MCF 10A (cell line): ENCODE measurements at regions of chr14 and their contacts with region 1.

Region 1: GRCh38 chr14:49892636-49893308 is at the start of gene ARF6:
- DNase-seq: peak; percentile 97
- H3K4me3 Mint-ChIP-seq: peak within 1 kb of the TSS; percentile 92
- H3K27ac Mint-ChIP-seq: peak within 1 kb of the TSS; percentile 99
- H3K4me1 Mint-ChIP-seq: peaks cover 28% of the 10 kb centered on the region
- H3K27me3 Mint-ChIP-seq: no peaks in the 10 kb centered on the region
- CTCF ChIP-seq: no peak
- total RNA-seq, gene ARF6: 111 and 112 TPM in 2 replicates

Region 2: DNA sequence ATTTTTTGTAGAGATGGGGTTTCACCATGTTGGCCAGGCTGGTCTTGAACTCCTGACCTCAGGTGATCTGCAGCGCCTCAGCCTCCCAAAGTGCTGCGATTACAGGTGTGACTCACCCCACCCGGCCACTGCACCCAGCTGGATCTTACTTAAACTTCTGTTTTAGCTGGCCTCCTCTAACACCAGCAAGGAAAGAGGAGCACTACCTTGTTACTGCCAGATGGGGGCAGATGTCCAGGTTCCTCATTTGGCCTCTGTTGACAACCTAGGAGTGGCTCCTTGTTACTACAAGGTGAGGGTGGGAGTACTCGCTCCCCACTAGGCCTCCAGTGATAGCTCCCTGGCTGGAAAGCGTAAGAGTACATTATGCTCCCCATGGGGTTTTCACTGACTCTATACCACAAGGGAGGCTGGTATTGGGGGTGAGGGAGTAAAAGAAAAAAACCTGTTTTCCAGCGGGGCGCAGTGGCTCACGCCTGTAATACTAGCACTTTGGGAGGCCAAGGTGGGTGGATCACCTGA is 13.0 kb before region 1 on chr14:
- CTCF ChIA-PET with region 1: interaction called, 10 read pairs
- POLR2A ChIA-PET with region 1: interaction called, 14 read pairs
- intact Hi-C with region 1: no loop called
- DNase-seq: peak; percentile 83
- H3K4me3 Mint-ChIP-seq: no peak overlapping the region
- H3K27ac Mint-ChIP-seq: peak overlapping the region; percentile 27
- H3K4me1 Mint-ChIP-seq: no peaks in the 10 kb centered on the region
- H3K27me3 Mint-ChIP-seq: no peaks in the 10 kb centered on the region
- CTCF ChIP-seq: peak; percentile 39

Region 3: DNA sequence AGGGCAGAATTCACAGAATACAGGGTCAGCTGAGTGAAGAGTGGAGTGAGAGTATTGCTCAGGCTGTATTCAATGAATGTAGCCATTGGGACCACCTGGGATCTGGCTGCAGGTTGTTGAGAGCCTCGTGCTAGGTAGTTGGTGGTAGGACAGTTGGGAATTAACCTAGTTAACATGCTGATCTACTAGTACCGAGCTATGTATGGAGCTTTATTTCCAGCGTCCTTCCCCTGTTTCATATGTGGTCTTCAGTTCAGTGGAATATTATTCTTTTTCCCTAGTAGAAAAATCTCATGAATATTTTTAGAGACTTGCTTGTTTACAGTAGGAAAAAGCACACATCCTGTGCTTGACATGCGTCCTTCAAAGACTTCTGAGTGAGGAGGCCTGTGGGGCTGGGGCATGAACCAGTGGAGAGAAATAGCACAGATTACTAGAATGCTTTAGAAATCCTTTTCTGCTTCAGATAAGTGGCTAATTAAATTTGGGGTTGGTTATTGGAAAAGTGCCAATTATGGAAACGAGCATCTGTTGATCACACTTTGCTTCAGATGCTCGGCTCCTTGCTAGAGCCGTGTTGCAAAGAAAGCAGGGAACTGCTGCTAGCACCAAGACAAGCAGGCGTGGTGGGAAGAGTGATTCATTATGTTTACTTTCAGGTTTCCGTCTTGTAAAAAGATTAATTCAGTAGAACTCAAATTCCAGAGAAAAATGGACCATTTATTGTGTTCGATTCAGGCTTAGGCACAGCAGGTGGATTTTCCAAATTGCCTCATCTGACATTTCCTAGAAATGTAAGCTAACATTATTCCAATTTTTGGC is 53.8 kb after region 1 on chr14:
- CTCF ChIA-PET with region 1: interaction called, 3 read pairs
- POLR2A ChIA-PET with region 1: interaction called, 58 read pairs
- intact Hi-C with region 1: no loop called
- DNase-seq: peak; percentile 72
- H3K4me3 Mint-ChIP-seq: peak overlapping the region; percentile 42
- H3K27ac Mint-ChIP-seq: peak overlapping the region; percentile 81
- H3K4me1 Mint-ChIP-seq: peaks cover 38% of the 10 kb centered on the region
- H3K27me3 Mint-ChIP-seq: no peaks in the 10 kb centered on the region
- CTCF ChIP-seq: no peak

Region 4: GRCh38 chr14:49971156-49972130 is 78.7 kb after region 1 on chr14:
- CTCF ChIA-PET with region 1: interaction called, 3 read pairs
- POLR2A ChIA-PET with region 1: interaction called, 58 read pairs
- intact Hi-C with region 1: no loop called
- DNase-seq: peak; percentile 80
- H3K4me3 Mint-ChIP-seq: peak overlapping the region; percentile 58
- H3K27ac Mint-ChIP-seq: peak overlapping the region; percentile 89
- H3K4me1 Mint-ChIP-seq: peaks cover 48% of the 10 kb centered on the region
- H3K27me3 Mint-ChIP-seq: no peaks in the 10 kb centered on the region
- CTCF ChIP-seq: no peak

Region 5: DNA sequence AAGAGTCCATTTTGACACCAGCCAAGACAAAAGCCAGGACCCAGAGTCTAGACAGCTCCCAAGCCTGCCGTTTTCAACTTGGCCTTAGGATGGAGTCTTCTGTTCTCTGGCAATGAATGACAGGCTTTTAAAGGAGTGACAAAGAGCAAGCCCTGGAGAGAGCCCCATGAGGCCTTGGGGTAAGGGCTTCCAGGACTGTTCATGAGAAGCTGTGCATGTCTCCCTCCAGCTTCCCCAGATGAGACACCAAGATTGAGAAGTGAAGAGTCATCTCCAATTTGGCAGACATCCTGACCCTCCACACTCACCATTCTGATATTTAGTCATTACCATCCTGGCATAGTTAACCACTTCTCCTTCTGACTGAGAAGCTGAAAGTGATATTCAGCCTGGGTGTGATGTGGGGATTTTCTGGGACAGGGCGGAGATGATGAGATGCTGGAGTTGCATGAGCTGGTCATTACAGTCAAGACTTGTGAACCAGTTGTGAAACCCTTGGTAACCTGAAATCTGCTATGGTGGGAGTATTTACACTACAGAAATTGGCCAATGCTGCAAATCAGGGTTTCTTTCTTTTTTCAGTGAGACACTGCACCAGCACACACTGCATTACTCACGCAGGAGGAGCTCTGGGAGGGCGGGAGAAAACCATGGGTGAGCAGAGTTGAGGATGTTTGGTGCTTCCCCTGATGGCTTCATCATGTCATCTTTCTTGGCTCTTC is 145.8 kb after region 1 on chr14:
- CTCF ChIA-PET with region 1: no interaction called
- POLR2A ChIA-PET with region 1: interaction called, 11 read pairs
- intact Hi-C with region 1: loop called (anchors 1 kb)
- DNase-seq: peak; percentile 94
- H3K4me3 Mint-ChIP-seq: peak overlapping the region; percentile 40
- H3K27ac Mint-ChIP-seq: peak overlapping the region; percentile 89
- H3K4me1 Mint-ChIP-seq: peaks cover 43% of the 10 kb centered on the region
- H3K27me3 Mint-ChIP-seq: no peaks in the 10 kb centered on the region
- CTCF ChIP-seq: peak; percentile 16

Region 6: GRCh38 chr14:50099335-50099734 is 206.6 kb after region 1 on chr14:
- CTCF ChIA-PET with region 1: interaction called, 14 read pairs
- POLR2A ChIA-PET with region 1: interaction called, 10 read pairs
- intact Hi-C with region 1: no loop called
- DNase-seq: peak; percentile 47
- H3K4me3 Mint-ChIP-seq: no peak overlapping the region
- H3K27ac Mint-ChIP-seq: peak overlapping the region; percentile 33
- H3K4me1 Mint-ChIP-seq: peaks cover 11% of the 10 kb centered on the region
- H3K27me3 Mint-ChIP-seq: no peaks in the 10 kb centered on the region
- CTCF ChIP-seq: no peak